Common myeloid progenitor, CD34-positive (primary cell): ENCODE measurements at regions of chr2 and their contacts with region 1.

Region 1: DNA sequence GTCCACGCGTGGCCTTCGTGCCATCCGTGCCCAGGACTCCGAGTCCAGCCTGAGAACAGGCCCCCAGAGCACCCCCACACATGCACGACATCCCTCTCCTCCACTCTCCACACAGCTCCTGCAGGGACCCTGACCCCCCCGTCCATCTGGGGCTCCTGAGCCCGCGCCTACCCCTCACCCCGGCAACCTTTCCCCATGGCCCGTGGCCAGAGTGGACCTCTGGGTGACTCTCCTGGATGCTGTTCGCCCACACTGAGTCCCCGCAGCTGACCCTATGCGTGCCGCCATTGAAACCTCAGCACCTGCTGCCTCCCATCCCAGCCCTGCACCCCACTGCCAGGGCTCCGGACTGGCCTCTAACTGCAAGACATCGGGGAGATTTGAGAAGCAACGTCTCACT is 132.0 kb upstream of the PXDN start:
- DNase-seq: no peak
- H3K4me3 ChIP-seq: no peak overlapping the region
- H3K27ac ChIP-seq: no peak overlapping the region
- H3K4me1 ChIP-seq: peaks cover 0 to 6% (median 2%) of the 10 kb centered on the region in 4 experiments
- H3K27me3 ChIP-seq: peaks cover 0 to 8% (median 1%) of the 10 kb centered on the region in 5 experiments

Region 2: DNA sequence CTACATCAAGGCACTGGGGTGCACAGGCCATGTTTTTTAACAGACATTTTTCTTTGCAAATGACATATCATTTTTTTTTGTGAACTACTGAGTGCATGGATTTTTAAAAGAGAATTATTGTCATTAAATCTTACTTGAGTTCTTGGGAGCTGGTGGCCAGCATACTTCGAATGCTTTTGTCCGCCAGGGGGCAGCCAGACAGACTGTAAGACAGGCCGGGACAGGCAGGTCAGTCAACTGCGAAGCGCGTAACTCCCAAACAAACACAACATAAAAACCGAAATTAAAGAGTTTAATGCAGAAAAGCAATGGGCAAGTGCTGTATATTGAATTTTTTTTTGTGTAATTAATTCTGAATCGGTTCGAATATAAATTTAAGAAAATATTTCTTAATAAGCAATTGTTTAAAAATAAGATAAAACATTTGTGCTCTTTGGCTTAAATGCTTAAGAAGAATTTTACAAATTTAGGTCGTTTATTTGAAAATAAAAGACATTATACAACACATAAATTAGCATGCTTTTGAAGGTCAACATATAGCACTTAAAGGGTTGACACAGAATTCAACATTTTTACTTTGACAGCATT is 10.1 kb after region 1 on chr2:
- CTCF ChIA-PET with region 1: interaction called, 12 read pairs
- POLR2A ChIA-PET with region 1: no interaction called
- DNase-seq: peak; percentile 65 to 82 (median 78)
- H3K4me3 ChIP-seq: no peak overlapping the region
- H3K27ac ChIP-seq: no peak overlapping the region
- H3K4me1 ChIP-seq: peaks cover 0 to 2% (median 0%) of the 10 kb centered on the region in 4 experiments
- H3K27me3 ChIP-seq: peaks cover 0 to 8% (median 0%) of the 10 kb centered on the region in 5 experiments